ENCODE measurements at regions of chr1 and their contacts with region 1.

Region 1: GRCh38 chr1:25477448-25478034 is 46.8 kb downstream of the MACO1 start:
- DNase-seq: no peak
- H3K4me3 ChIP-seq: no peak overlapping the region
- H3K27ac ChIP-seq: no peak overlapping the region
- H3K4me1 ChIP-seq: peaks cover 23% of the 10 kb centered on the region
- H3K27me3 ChIP-seq: no peaks in the 10 kb centered on the region
- CTCF ChIP-seq: no peak

Region 2: DNA sequence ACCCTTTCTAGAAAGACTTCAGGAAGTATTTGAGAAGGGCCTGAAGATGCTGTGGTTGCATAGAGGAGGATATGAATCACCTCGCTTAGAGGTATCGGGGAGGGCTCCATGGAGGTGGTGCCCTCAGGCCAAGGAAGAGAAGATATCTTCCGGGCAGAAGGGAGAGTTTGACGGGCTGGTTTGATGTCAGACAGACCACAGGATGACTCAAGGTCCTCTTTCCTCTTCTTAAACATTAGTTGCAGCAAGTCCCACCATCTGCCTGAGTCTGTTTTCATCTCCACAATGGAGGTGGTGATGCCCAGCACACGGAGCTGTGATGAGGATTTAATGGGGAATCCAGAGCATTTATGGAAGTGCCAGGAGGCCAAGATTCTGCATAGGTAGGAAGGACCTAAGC is 522.4 kb before region 1 on chr1:
- CTCF ChIA-PET with region 1: no interaction called
- POLR2A ChIA-PET with region 1: no interaction called
- intact Hi-C with region 1: no loop called
- DNase-seq: peak; percentile 45 to 74
- H3K4me3 ChIP-seq: no peak overlapping the region
- H3K27ac ChIP-seq: no peak overlapping the region
- H3K4me1 ChIP-seq: no peaks in the 10 kb centered on the region
- H3K27me3 ChIP-seq: no peaks in the 10 kb centered on the region
- CTCF ChIP-seq: no peak

Region 3: DNA sequence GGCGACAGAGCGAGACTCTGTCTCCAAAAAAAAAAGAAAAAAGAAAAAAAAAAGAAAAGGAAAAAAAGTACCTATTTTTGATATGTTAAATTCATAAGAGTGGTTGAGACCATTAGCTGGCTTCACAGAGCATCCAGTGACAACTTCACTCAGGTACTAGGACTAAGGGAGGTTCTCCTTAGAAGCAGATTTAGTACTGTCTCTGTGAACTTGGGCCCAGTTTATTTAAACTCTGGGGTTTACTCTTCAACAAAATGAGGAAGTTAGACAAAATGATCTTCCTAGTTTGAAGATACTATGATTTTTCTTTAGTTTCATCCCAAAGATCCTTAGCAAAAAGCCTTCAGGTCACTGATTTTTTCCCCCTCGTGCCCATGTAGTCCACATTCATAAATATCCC is 25.6 kb before region 1 on chr1:
- CTCF ChIA-PET with region 1: no interaction called
- POLR2A ChIA-PET with region 1: no interaction called
- intact Hi-C with region 1: loop called (anchors 2 kb)
- DNase-seq: no peak
- H3K4me3 ChIP-seq: no peak overlapping the region
- H3K27ac ChIP-seq: no peak overlapping the region
- H3K4me1 ChIP-seq: no peaks in the 10 kb centered on the region
- H3K27me3 ChIP-seq: no peaks in the 10 kb centered on the region
- CTCF ChIP-seq: no peak